ENCODE measurements at regions of chr11 and their contacts with region 1.

Region 1: GRCh38 chr11:17276236-17277023 is at the start of gene NUCB2:
- DNase-seq: peak; percentile 97 to 98 (median 98)
- H3K4me3 ChIP-seq: peak within 1 kb of the TSS; percentile 81
- H3K27ac ChIP-seq: peak within 1 kb of the TSS; percentile 59 to 96
- H3K4me1 ChIP-seq: no peaks in the 10 kb centered on the region
- H3K27me3 ChIP-seq: no peaks in the 10 kb centered on the region
- CTCF ChIP-seq: no peak
- EP300 ChIP-seq: no peak
- POLR2A ChIP-seq: peak; percentile 69
- total RNA-seq, gene NUCB2: 36.7 to 116 (median 86.1) TPM

Region 2: DNA sequence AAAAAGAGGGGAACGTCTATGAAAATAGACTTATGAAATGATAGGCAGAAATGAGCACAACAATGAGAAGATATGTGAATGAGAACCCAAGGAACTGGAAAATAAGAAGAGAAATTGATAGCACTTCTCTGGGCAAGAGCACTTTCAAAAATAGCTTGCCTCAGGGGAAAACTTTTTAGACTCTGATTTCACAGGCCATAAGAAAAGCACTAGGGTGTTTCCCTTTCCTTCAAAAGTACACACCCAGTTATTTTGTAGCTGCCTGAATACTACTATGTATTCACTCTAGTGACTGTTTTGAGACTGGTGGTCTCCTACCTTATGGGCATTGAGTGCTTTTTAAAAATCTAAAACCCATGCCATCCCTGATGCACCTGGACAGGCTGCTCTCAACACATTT is 747.8 kb before region 1 on chr11:
- intact Hi-C with region 1: no loop called
- DNase-seq: no peak
- H3K4me3 ChIP-seq: no peak overlapping the region
- H3K27ac ChIP-seq: no peak overlapping the region
- H3K4me1 ChIP-seq: no peaks in the 10 kb centered on the region
- H3K27me3 ChIP-seq: no peaks in the 10 kb centered on the region
- CTCF ChIP-seq: no peak
- EP300 ChIP-seq: no peak
- POLR2A ChIP-seq: no peak

Region 3: GRCh38 chr11:17077520-17078401 is 198.7 kb before region 1 on chr11 and contains the start of gene RPS13:
- intact Hi-C with region 1: loop called in 1 of 4 experiments (anchors 10 kb)
- DNase-seq: peak; percentile 94 to 97 (median 95)
- H3K4me3 ChIP-seq: peak within 1 kb of the TSS; percentile 98
- H3K27ac ChIP-seq: peak within 1 kb of the TSS; percentile 81 to 91
- H3K4me1 ChIP-seq: peaks cover 9% of the 10 kb centered on the region
- H3K27me3 ChIP-seq: no peaks in the 10 kb centered on the region
- CTCF ChIP-seq: no peak
- EP300 ChIP-seq: peak; percentile 5
- POLR2A ChIP-seq: peak; percentile 38
- total RNA-seq, gene RPS13: 1,394 to 4,750 (median 1,901) TPM

Region 4: GRCh38 chr11:17354601-17354991 is 78.2 kb after region 1 on chr11:
- intact Hi-C with region 1: loop called in 1 of 4 experiments (anchors 5 kb)
- DNase-seq: peak in 4 of 5 donors; percentile 21 to 70 (median 36)
- H3K4me3 ChIP-seq: no peak overlapping the region
- H3K27ac ChIP-seq: no peak overlapping the region
- H3K4me1 ChIP-seq: no peaks in the 10 kb centered on the region
- H3K27me3 ChIP-seq: no peaks in the 10 kb centered on the region
- CTCF ChIP-seq: peak in 2 of 3 donors; percentile 26 to 35
- EP300 ChIP-seq: no peak
- POLR2A ChIP-seq: no peak

Region 5: DNA sequence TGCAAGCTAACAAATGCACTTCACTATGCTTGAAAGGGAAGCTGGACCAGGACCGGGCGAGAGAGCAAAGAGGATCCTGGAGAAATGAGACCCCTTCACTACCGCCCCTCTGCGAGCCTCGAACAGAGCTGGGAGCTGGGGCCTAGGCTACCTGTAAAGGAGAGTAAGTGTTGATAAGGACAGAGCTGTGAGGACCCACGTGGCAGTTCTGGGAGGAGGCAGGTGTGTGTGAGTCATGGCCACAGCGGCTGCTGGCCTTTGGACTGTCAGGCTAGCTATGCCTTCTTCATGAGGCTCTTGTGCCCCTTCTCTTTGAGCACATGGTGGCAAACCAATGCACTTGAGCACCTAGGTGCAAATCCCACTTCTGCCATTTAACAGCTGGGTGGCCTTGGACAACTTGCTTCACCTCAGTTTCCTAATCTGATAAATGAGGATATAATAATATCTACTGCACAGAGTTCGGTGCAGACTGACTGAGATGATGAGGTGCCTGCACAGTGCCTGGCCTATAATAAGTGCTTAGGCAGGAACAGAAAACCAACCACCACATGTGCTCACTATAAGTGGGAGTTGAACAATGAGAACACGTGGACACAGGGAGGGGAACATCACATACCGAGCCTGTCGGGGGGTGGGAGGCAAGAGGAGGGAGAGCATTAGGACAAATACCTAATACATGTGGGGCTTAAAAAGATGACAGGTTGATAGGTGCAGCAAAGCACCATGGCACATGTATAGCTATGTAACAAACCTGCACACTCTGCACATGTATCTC is 147.3 kb after region 1 on chr11:
- intact Hi-C with region 1: no loop called
- DNase-seq: no peak
- H3K4me3 ChIP-seq: no peak overlapping the region
- H3K27ac ChIP-seq: no peak overlapping the region
- H3K4me1 ChIP-seq: no peaks in the 10 kb centered on the region
- H3K27me3 ChIP-seq: no peaks in the 10 kb centered on the region
- CTCF ChIP-seq: no peak
- EP300 ChIP-seq: no peak
- POLR2A ChIP-seq: no peak

Region 6: GRCh38 chr11:17519061-17519885 is 242.8 kb after region 1 on chr11:
- intact Hi-C with region 1: no loop called
- DNase-seq: no peak
- H3K4me3 ChIP-seq: no peak overlapping the region
- H3K27ac ChIP-seq: no peak overlapping the region
- H3K4me1 ChIP-seq: no peaks in the 10 kb centered on the region
- H3K27me3 ChIP-seq: no peaks in the 10 kb centered on the region
- CTCF ChIP-seq: no peak
- EP300 ChIP-seq: no peak
- POLR2A ChIP-seq: no peak

Measured in ovary (tissue), 10 donors.